ENCODE measurements at regions of chr3 and their contacts with region 1.

Region 1: DNA sequence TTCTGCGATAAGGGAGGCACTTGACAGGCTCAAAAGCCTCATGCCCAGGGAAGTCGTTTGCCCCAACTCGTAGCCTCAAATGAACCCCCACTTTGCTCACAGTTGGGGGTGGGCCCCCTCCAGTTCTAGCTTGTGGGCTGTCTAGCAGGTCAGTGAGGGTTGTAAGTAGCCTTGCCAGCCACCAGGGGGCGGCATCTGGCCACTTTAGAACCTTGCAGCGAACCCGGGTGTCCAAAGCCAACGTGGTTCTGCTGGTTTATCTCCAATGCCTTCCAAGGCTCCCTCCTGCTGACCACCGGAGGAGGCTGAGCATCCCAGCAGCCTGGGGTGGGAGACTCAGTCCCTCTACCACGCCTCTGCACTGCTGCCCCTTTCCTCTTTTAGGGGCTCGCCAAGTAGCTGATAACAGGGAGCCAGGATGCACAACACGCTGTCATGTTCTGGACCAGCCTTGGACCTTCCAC is 9.2 kb upstream of the RBSN start:
- DNase-seq: peak; percentile 51 to 80
- ATAC-seq: peak; percentile 69 to 90 (median 83)
- H3K4me3 ChIP-seq: no peak overlapping the region
- H3K27ac ChIP-seq: no peak overlapping the region
- H3K4me1 ChIP-seq: peaks cover 0 to 17% (median 4%) of the 10 kb centered on the region in 9 donors
- H3K27me3 ChIP-seq: peaks cover 0 to 7% (median 0%) of the 10 kb centered on the region in 7 donors
- CTCF ChIP-seq: peak; percentile 71 to 95 (median 91)

Region 2: DNA sequence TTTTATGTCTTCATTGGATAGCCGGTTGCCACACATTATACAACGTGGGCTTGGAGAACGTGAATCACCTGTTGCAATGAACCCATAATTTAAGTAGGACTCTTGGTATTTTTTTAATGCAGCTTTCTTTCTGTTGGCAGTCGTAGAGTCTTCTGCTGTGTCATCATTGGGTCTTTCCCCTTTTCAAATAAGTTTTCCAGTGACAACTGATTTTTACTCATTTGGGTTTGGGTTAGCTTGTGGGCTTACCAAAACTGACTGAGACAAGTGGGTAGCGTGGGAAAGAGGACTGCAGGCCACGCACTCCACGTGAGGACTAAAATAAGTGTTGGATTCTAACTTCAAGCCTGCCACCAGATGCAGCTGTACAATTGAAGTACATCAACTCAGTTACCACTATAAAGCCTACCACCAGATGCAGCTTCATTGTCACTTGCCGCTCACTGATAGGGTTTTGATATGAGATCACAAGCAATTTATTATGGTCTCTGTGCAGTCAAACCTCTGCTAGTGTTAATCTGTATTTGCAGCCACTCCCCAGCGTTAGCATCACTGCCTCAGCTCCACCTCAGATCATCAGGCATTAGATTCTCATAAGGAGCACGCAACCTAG is 91.5 kb after region 1 on chr3:
- intact Hi-C with region 1: loop called in 5 of 10 experiments (anchors 5 to 10 kb)
- DNase-seq: no peak
- ATAC-seq: no peak
- H3K4me3 ChIP-seq: no peak overlapping the region
- H3K27ac ChIP-seq: no peak overlapping the region
- H3K4me1 ChIP-seq: no peaks in the 10 kb centered on the region
- H3K27me3 ChIP-seq: no peaks in the 10 kb centered on the region
- CTCF ChIP-seq: no peak

Region 3: DNA sequence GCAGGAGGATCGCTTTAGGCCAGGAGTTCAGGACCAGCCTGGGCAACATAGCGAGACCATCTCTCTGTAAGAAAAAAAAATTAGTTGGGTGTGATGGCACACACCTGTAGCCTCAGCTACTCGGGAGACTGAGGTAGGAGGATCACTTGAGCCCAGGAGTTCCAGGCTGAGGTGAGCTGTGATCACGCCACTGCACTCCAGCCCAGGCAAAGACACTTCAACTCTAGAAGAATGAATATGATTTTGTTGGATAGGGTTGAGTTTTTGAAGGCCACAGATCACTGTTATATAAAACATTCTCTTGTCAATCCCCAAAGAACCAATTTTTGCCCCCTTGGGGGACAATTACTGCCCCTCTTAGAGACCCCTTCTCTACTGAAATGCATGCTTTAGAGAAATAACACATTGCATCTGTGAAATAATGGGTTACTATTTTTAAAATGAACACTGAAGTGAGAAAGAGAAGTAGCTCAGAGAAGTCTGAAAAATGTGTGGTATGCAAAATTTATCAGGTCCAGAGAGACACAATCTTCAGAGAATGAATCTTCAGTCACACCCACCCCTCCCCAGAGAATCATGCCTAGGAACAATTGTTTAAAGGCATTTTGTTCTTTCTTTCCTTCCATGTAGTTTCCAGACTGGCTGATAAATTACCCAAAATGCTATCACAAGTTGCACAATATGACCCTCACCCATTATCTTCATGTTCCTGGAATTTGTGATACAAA is 276.6 kb after region 1 on chr3:
- intact Hi-C with region 1: loop called in 1 of 10 experiments (anchors 10 kb)
- DNase-seq: no peak
- ATAC-seq: no peak
- H3K4me3 ChIP-seq: no peak overlapping the region
- H3K27ac ChIP-seq: peak overlapping the region in 1 of 10 donors; percentile 38
- H3K4me1 ChIP-seq: peaks cover 0 to 30% (median 3%) of the 10 kb centered on the region in 9 donors
- H3K27me3 ChIP-seq: no peaks in the 10 kb centered on the region
- CTCF ChIP-seq: no peak

Region 4: GRCh38 chr3:15572138-15572537 is 464.0 kb after region 1 on chr3:
- intact Hi-C with region 1: loop called in 1 of 10 experiments (anchors 5 kb)
- DNase-seq: no peak
- ATAC-seq: no peak
- H3K4me3 ChIP-seq: no peak overlapping the region
- H3K27ac ChIP-seq: no peak overlapping the region
- H3K4me1 ChIP-seq: peaks cover 0 to 6% (median 0%) of the 10 kb centered on the region in 9 donors
- H3K27me3 ChIP-seq: no peaks in the 10 kb centered on the region
- CTCF ChIP-seq: no peak